ENCODE measurements at regions of chrX and their contacts with region 1.

Region 1: GRCh38 chrX:56978172-56978571 is 17.2 kb downstream of the SPIN3 start:
- DNase-seq: peak in 1 of 2 experiments; percentile 62
- H3K4me3 ChIP-seq: no peak overlapping the region
- H3K27ac ChIP-seq: no peak overlapping the region
- H3K4me1 ChIP-seq: peaks cover 9% of the 10 kb centered on the region; the same call in 1 of the 2 replicates
- H3K27me3 ChIP-seq: no peaks in the 10 kb centered on the region
- CTCF ChIP-seq: peak; percentile 72

Region 2: DNA sequence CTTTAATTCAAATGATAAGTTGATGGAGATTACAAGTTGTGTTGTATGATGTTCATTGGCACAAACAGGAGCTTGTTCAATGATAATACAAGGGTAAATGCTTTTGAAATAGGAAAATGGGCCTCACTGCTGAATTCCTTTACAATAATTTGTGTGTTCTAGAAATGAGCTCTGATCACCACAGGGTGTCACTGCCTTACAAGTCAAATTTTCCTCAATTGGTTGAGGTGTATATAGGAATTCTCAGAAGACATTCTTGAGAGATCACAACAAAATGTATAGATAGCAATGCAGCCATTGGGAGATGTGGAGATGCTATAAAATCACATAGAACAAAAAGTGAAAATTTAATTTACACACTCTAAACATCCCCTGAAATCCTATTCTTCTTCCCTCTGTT is 696.4 kb before region 1 on chrX:
- CTCF ChIA-PET with region 1: interaction called, 3 read pairs
- POLR2A ChIA-PET with region 1: no interaction called
- intact Hi-C with region 1: loop called (anchors 5 kb)
- DNase-seq: peak; percentile 4 to 38
- H3K4me3 ChIP-seq: no peak overlapping the region
- H3K27ac ChIP-seq: no peak overlapping the region
- H3K4me1 ChIP-seq: no peaks in the 10 kb centered on the region
- H3K27me3 ChIP-seq: no peaks in the 10 kb centered on the region
- CTCF ChIP-seq: peak; percentile 62

Region 3: DNA sequence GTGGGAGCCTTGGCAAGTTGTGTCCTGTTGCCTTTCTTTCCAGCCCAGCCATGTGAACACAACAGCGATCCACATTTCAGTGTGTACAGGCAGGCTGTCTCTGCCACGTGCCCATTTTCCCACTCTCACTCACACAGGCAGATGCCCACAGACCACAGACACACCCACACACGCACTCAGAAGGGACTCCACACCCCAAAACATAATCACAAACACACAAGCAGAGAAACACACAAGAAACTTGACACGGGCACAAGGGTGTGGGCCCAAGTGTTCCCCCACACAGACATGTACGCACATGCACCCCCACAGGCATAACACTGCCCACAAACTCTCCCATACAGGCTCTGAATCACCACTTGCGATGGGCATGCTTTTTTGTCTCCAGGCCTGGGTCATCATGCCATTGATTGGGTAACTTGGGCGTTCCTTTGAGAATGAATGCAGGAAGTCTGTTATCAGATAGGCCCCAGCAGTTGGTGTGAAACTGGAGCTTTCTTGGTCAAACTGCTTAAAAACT is 164.8 kb before region 1 on chrX:
- CTCF ChIA-PET with region 1: no interaction called
- POLR2A ChIA-PET with region 1: no interaction called
- intact Hi-C with region 1: loop called (anchors 10 kb)
- DNase-seq: peak in 1 of 2 experiments; percentile 75
- H3K4me3 ChIP-seq: no peak overlapping the region
- H3K27ac ChIP-seq: no peak overlapping the region
- H3K4me1 ChIP-seq: no peaks in the 10 kb centered on the region
- H3K27me3 ChIP-seq: no peaks in the 10 kb centered on the region
- CTCF ChIP-seq: no peak

Region 4: GRCh38 chrX:57121162-57121741 is 143.1 kb after region 1 on chrX and contains the start of gene SPIN2B:
- CTCF ChIA-PET with region 1: no interaction called
- POLR2A ChIA-PET with region 1: no interaction called
- intact Hi-C with region 1: no loop called
- DNase-seq: peak; percentile 76 to 93
- H3K4me3 ChIP-seq: peak within 1 kb of the TSS; percentile 68
- H3K27ac ChIP-seq: no peak within 1 kb of the TSS
- H3K4me1 ChIP-seq: no peaks in the 10 kb centered on the region
- H3K27me3 ChIP-seq: no peaks in the 10 kb centered on the region
- CTCF ChIP-seq: no peak
- total RNA-seq, gene SPIN2B: 31.2 and 36.0 TPM in 2 replicates

Measured in PC-9 (cell line).